Upper lobe of right lung (tissue), 1 donor: ENCODE measurements at regions of chr16 and their contacts with region 1.

Region 1: GRCh38 chr16:22109258-22109898 is 17.0 kb downstream of the VWA3A start:
- DNase-seq: no peak
- ATAC-seq: no peak
- H3K4me3 ChIP-seq: no peak overlapping the region
- H3K27ac ChIP-seq: no peak overlapping the region
- H3K4me1 ChIP-seq: no peaks in the 10 kb centered on the region
- H3K27me3 ChIP-seq: no peaks in the 10 kb centered on the region
- CTCF ChIP-seq: no peak

Region 2: DNA sequence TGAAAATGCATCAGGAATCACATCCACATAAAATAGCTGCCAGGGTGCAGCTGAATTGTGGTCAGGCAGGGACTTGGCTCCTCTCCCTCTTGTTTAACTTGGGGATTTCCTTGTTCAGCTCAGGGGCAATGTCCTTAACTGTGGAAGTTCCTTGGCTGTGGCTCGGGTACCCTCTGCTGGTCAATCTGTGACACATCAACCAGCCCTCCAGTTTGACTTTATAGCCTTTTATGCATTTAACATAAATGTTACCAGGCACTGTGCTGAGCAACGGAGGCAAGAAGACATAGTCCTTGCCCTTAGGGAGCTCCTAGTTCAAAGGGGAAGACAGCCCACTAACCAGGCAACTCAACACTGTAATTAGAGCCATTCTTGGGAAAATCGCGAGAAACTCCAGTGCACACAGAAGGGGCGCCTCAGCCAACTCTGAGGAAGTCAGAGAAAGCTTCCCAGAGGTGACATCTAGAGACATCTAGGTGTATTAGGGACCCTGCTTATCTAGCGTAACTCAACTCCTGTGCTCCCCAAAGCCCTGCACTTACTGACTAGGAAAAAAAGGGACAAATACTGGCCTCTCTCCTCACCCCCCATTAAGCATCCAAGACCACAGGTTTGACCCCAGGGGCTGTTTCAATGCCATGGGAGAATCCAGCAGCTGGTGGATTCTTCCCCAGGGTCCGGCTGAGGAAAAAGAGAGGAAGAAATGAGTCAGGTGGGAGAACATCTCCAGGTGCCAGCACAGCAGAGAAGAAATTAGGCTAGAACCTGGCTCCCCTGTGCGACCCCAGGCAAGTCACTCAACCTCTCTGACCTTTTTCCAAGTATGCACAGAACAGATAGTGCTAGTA is 79.4 kb after region 1 on chr16:
- intact Hi-C with region 1: loop called (anchors 10 kb)
- DNase-seq: peak; percentile 70
- ATAC-seq: peak; percentile 2
- H3K4me3 ChIP-seq: no peak overlapping the region
- H3K27ac ChIP-seq: peak overlapping the region; percentile 92
- H3K4me1 ChIP-seq: peaks cover 28% of the 10 kb centered on the region
- H3K27me3 ChIP-seq: no peaks in the 10 kb centered on the region
- CTCF ChIP-seq: peak; percentile 83

Region 3: DNA sequence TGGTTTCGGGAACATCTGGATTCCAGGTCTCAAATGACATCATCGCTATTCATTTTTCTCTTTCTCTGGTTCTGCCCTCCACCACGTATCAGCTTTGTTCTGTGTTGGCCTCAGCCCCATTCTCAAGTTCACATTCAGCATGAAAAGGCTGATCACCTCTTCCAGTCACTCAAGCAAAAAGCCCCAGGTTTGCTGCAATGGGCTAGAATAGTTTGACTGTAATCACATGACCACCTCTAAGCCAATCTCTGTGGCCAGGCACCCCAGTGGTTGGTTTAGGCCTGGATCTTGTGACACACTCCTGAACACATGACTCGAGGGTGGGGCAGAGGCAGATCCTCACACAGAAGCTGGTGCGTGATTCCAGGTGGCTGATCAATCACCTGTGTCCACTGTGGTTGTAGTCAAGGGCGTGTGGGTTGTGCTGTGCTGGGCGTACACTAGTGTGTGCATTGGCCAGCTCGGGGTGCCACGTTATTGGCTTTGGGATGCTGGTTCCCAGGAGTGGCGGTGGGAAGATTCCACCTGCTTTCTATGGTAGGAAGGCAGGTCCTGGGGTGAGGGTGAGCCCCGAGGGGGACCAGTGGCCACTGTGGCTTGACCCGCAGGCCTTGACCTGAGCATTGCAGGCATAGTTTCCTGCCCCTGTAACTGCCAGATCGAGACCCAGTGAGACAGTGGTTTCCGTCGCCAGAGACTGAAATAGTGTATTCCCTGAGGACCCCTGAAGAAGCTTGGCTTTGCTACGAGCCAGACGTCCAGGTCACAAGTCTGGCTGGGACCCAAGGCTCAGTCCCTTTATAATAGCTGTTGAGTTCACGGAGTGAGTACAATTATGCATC is 108.7 kb after region 1 on chr16:
- intact Hi-C with region 1: no loop called
- DNase-seq: no peak
- ATAC-seq: peak; percentile 14
- H3K4me3 ChIP-seq: no peak overlapping the region
- H3K27ac ChIP-seq: peak overlapping the region; percentile 11
- H3K4me1 ChIP-seq: peaks cover 30% of the 10 kb centered on the region
- H3K27me3 ChIP-seq: no peaks in the 10 kb centered on the region
- CTCF ChIP-seq: no peak